ENCODE measurements at regions of chr7 and their contacts with region 1.

Region 1: GRCh38 chr7:131507592-131508331 is 48.7 kb downstream of the PODXL start:
- DNase-seq: no peak
- H3K4me3 ChIP-seq: no peak overlapping the region
- H3K27ac ChIP-seq: no peak overlapping the region
- H3K4me1 ChIP-seq: peaks cover 24% of the 10 kb centered on the region
- H3K27me3 ChIP-seq: no peaks in the 10 kb centered on the region
- CTCF ChIP-seq: peak; percentile 82 to 89 (median 88)
- POLR2A ChIP-seq: no peak

Region 2: DNA sequence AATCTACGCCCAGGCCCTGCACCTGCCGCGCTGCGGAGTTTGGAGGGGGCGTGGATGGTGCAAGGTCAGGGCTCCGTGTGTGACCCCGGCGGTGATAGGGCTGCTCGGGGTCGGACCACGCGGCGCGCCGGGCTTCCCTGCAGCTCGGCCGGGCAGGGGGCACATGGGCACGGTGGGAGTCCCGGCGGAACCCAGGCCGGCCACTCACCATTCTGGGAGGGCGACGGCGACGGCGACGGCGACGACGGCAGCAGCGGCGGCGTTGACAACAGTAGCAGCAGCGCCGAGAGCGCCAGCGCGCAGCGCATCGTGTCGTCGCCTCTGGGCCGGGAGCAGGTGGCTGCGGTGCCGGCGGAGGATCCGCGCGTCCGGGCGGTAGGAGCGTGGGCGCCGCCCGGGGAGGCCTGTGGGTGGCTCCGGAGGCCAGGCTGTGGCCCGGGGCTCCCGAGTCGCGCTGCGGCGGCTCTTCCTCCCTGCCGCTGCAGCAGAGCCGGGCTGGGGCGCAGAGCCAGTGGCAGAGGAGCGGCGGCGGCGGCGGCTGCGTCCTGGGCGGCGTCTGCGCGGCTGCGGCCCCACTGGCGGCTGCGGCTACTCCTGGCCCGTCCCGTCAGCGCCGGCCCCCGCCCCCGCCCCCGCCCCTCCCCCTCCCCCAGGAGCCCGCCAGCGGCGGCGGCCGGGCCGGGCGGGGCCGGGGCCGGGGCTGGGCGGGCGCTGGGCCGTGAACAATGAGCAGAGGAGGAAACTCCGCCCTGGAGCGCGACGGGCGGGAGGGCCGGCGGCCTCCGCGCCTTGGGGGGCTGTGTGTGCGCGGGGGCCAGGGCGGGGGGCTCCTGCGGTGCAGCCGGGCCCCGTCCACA is 48.5 kb after region 1 on chr7 and contains the start of gene PODXL:
- intact Hi-C with region 1: no loop called
- DNase-seq: no peak
- H3K4me3 ChIP-seq: peak within 1 kb of the TSS; percentile 56 to 62
- H3K27ac ChIP-seq: peak within 1 kb of the TSS; percentile 57
- H3K4me1 ChIP-seq: peaks cover 26% of the 10 kb centered on the region
- H3K27me3 ChIP-seq: no peaks in the 10 kb centered on the region
- CTCF ChIP-seq: no peak
- POLR2A ChIP-seq: peak in 1 of 2 donors; percentile 6
- total RNA-seq, gene PODXL: 26.0 TPM

Region 3: GRCh38 chr7:131654668-131655326 is 147.0 kb after region 1 on chr7:
- intact Hi-C with region 1: loop called (anchors 5 kb)
- DNase-seq: no peak
- H3K4me3 ChIP-seq: no peak overlapping the region
- H3K27ac ChIP-seq: no peak overlapping the region
- H3K4me1 ChIP-seq: no peaks in the 10 kb centered on the region
- H3K27me3 ChIP-seq: no peaks in the 10 kb centered on the region
- CTCF ChIP-seq: peak; percentile 74 to 88 (median 87)
- POLR2A ChIP-seq: no peak

Region 4: DNA sequence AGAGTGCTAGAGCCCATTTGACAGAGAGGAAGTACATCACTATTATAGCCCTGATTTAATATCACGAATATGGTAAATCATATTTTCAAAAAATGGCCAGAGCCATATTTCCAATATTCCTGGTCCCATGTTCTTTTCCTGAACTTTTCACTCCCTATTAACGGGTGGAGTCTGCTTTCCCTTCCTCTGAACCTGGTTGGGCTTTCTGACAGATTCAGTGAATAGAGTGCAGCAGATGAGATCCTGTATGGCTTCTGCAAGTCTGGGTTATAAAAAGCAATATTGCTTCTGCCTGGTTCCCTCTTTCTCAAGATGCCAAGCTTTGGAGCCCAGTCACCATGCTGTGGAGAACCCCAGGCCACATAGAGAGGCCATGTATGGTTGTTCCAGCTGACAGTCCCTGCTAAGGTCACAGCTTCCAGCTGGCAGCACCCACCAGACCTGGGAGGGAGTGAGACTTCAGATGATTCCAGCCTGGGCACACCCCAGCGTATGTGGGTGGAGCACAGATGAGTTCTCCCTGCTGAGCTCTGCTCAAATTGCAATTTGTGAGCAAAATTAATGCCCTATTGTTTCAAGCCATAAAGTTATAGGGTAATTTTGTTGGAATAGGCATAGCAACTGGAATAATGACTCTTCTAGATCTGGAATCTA is 1592.0 kb after region 1 on chr7:
- intact Hi-C with region 1: no loop called
- DNase-seq: no peak
- H3K4me3 ChIP-seq: no peak overlapping the region
- H3K27ac ChIP-seq: no peak overlapping the region
- H3K4me1 ChIP-seq: no peaks in the 10 kb centered on the region
- H3K27me3 ChIP-seq: no peaks in the 10 kb centered on the region
- CTCF ChIP-seq: no peak
- POLR2A ChIP-seq: no peak

Measured in vagina (tissue), 2 donors.